Activated CD4-positive, alpha-beta T cell treated with anti-CD3 and anti-CD28 coated beads for 36 hours (primary cell): ENCODE measurements at regions of chr10 and their contacts with region 1.

Region 1: DNA sequence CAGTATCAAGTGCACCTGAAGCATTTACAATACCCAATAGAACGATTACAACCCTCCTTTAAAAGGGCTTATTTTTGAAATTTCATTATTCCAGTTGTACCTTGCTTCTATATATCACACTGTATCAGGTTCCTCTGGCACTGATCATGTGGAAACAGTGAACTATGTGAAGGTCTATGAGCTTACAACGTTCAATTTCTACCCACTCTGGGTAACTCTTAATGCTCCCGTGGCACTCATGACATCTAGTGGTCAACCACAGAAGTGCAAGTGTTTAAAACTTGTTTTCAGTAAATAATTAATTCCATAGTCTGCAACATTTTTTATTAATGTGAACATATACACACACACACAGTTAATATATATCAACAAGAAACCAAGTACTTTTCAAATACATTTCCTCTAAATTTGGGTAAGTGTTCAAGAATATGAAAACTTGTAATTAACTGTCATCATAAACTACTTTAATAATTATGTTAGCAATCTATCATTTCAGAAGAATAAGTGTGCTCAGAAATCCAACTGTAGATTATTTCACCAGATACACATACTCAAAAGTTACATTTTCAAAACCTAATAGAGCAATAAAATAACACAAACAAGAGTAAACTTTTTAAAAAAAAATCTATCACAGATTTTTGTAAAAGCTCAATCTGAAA is 61.0 kb downstream of the MPP7 start:
- DNase-seq: peak; percentile 57
- ATAC-seq: peak; percentile 79
- H3K4me3 Mint-ChIP-seq: no peak overlapping the region
- H3K27ac Mint-ChIP-seq: no peak overlapping the region
- H3K4me1 Mint-ChIP-seq: peaks cover 30% of the 10 kb centered on the region
- H3K27me3 Mint-ChIP-seq: no peaks in the 10 kb centered on the region

Region 2: DNA sequence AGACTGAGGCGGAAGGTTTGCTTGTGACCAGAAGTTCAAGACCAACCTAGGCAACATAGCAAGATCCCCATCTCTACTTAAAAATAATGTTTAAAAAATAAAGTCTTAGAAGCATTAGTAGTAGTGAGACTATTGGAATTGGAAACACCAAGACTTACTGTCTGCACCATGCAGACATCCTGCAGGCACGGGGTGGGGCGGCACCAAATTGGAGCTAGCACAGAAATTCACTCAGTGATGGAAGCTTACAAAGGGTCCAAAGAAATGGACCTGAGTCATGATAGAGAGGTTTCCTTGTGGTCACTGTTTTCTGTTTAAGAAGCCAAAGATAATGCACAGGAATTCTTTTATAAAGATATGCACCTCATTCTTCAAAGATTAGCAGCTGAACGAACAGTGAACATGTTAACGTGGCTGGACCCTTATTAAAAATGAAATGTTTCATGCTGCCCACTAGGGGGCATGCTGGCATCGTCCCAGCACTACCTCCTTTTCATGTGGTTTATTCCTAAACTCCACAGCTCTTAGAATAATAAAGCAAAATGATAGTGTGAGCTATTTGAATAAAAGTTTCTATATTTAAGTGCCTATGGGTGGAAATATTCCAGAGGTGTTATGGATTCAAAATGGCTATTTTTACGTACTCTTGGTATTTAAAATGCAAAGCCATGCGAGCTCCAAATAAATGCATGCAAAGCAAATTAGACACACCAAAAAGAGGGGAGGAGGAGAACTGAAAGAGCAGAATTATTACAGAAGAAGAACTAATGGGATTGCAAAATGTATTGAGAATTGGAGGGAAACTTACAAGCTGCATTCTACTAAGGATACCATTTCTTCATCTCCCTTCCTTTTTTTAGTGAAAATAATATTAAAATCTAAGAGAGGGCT is 1515.8 kb before region 1 on chr10:
- CTCF ChIA-PET with region 1: no interaction called
- POLR2A ChIA-PET with region 1: no interaction called
- intact Hi-C with region 1: no loop called
- DNase-seq: peak; percentile 71
- ATAC-seq: peak; percentile 56
- H3K4me3 Mint-ChIP-seq: no peak overlapping the region
- H3K27ac Mint-ChIP-seq: no peak overlapping the region
- H3K4me1 Mint-ChIP-seq: peaks cover 4% of the 10 kb centered on the region
- H3K27me3 Mint-ChIP-seq: no peaks in the 10 kb centered on the region

Region 3: GRCh38 chr10:27558612-27559020 is 683.3 kb before region 1 on chr10:
- CTCF ChIA-PET with region 1: interaction called, 4 read pairs
- POLR2A ChIA-PET with region 1: no interaction called
- intact Hi-C with region 1: loop called (anchors 1 to 5 kb)
- DNase-seq: peak; percentile 50
- ATAC-seq: peak; percentile 30
- H3K4me3 Mint-ChIP-seq: no peak overlapping the region
- H3K27ac Mint-ChIP-seq: no peak overlapping the region
- H3K4me1 Mint-ChIP-seq: no peaks in the 10 kb centered on the region
- H3K27me3 Mint-ChIP-seq: no peaks in the 10 kb centered on the region

Region 4: GRCh38 chr10:27724287-27724686 is 517.6 kb before region 1 on chr10:
- CTCF ChIA-PET with region 1: no interaction called
- POLR2A ChIA-PET with region 1: no interaction called
- intact Hi-C with region 1: no loop called
- DNase-seq: no peak
- ATAC-seq: no peak
- H3K4me3 Mint-ChIP-seq: no peak overlapping the region
- H3K27ac Mint-ChIP-seq: no peak overlapping the region
- H3K4me1 Mint-ChIP-seq: peaks cover 2% of the 10 kb centered on the region
- H3K27me3 Mint-ChIP-seq: peaks cover 26% of the 10 kb centered on the region

Region 5: DNA sequence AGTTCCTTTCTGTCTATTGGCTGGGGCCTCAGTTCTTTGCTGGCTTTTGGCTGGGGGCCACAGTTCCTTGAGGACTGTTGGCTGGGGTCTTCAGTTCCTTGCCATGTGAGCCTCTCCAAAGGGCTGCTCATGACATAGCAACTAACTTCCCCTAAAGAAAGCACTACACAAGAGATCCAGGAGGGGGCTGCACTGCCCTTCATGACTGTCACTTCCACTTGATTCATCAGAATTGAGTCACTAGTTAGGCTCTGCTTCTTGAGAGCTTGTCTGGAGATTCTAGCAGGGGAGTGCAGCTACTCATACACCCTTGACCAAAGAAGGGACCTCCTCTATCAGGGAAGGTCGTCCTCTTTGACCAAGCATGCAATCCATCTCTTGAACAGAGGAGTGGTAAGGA is 458.2 kb before region 1 on chr10:
- CTCF ChIA-PET with region 1: interaction called, 10 read pairs
- POLR2A ChIA-PET with region 1: no interaction called
- intact Hi-C with region 1: loop called in 1 of 2 experiments (anchors 1 kb)
- DNase-seq: peak; percentile 54
- ATAC-seq: peak; percentile 86
- H3K4me3 Mint-ChIP-seq: no peak overlapping the region
- H3K27ac Mint-ChIP-seq: no peak overlapping the region
- H3K4me1 Mint-ChIP-seq: no peaks in the 10 kb centered on the region
- H3K27me3 Mint-ChIP-seq: peaks cover 11% of the 10 kb centered on the region

Region 6: GRCh38 chr10:28087661-28088351 is 154.1 kb before region 1 on chr10:
- CTCF ChIA-PET with region 1: no interaction called
- POLR2A ChIA-PET with region 1: no interaction called
- intact Hi-C with region 1: loop called in 1 of 2 experiments (anchors 5 kb)
- DNase-seq: peak; percentile 22
- ATAC-seq: peak; percentile 90
- H3K4me3 Mint-ChIP-seq: no peak overlapping the region
- H3K27ac Mint-ChIP-seq: peak overlapping the region; percentile 95
- H3K4me1 Mint-ChIP-seq: peaks cover 18% of the 10 kb centered on the region
- H3K27me3 Mint-ChIP-seq: no peaks in the 10 kb centered on the region

Region 7: DNA sequence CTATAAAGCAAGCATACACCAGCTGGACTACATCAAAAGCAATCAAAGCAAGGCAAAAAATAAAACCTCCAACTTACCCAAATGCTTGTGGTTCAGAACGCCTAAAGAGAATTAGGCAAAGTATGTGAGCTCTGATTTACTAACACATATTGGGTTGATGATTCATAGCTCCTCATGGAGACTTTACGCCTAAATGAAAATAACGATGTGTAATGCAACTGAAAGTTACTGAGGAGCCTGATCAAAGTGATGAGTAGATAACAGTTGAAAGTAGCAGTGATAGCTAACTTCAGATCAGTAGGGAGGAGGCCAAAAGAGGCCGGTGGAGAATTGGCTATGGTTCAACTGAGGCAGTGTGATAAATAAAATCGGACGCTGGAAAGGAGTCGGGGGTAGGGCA is 24.0 kb before region 1 on chr10:
- CTCF ChIA-PET with region 1: interaction called, 25 read pairs
- POLR2A ChIA-PET with region 1: no interaction called
- intact Hi-C with region 1: no loop called
- DNase-seq: peak; percentile 39
- ATAC-seq: peak; percentile 98
- H3K4me3 Mint-ChIP-seq: no peak overlapping the region
- H3K27ac Mint-ChIP-seq: no peak overlapping the region
- H3K4me1 Mint-ChIP-seq: peaks cover 39% of the 10 kb centered on the region
- H3K27me3 Mint-ChIP-seq: no peaks in the 10 kb centered on the region

Region 8: DNA sequence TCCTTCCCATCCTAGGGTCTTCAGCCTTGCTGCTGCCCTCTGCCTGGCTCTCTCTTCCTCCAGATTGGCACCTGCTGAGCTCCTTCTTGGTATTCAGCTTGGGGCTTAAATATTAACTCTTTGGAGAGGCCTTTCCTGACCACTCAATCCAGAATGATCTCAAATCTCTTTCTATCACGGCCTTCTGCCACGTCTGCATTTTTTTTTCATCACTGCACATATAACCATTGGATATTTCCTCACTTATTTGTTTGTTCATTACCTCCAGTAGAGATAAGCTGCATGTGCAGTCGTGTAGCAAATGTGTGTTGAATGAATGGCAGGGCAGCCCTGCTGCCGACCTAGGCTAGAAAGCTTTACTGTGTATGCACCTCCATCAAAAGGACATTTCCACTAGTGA is 112.6 kb after region 1 on chr10:
- CTCF ChIA-PET with region 1: no interaction called
- POLR2A ChIA-PET with region 1: no interaction called
- intact Hi-C with region 1: no loop called
- DNase-seq: no peak
- ATAC-seq: no peak
- H3K4me3 Mint-ChIP-seq: no peak overlapping the region
- H3K27ac Mint-ChIP-seq: no peak overlapping the region
- H3K4me1 Mint-ChIP-seq: peaks cover 2% of the 10 kb centered on the region
- H3K27me3 Mint-ChIP-seq: no peaks in the 10 kb centered on the region

Region 9: DNA sequence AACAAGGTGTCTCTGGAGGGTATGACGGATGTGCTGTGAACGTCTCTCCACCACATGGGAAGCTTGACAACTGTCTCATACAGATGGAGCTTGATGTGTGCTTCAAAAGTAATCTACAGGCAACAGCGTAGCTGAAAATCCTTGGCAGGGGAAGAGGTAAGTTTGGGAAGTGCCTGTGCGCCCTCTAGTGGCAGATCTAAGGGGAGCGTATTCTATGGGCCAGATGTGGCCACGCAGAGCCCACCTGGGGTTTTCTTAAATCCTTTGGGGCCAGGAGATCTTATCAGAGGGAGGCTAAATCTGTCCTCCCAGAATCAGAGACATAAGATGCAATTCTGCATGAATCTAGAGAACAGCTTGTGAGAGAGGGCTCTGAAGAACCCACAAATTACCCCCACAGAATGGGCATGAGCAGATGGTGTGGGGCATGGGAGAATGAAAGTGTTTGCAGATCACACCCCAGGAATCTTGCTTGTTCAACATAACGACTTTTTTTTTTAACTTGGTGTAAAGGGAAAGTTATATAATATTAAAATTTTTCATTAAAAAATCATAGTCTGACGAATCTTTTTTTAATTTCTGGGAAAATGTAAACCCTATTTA is 152.2 kb after region 1 on chr10:
- CTCF ChIA-PET with region 1: interaction called, 53 read pairs
- POLR2A ChIA-PET with region 1: no interaction called
- intact Hi-C with region 1: no loop called
- DNase-seq: peak; percentile 82
- ATAC-seq: peak; percentile 87
- H3K4me3 Mint-ChIP-seq: no peak overlapping the region
- H3K27ac Mint-ChIP-seq: no peak overlapping the region
- H3K4me1 Mint-ChIP-seq: peaks cover 4% of the 10 kb centered on the region
- H3K27me3 Mint-ChIP-seq: peaks cover 4% of the 10 kb centered on the region